ENCODE measurements at regions of chrX and their contacts with region 1.

Region 1: GRCh38 chrX:30570505-30570904 is 7.1 kb downstream of the TASL start:
- DNase-seq: no peak
- H3K4me3 ChIP-seq: no peak overlapping the region
- H3K27ac ChIP-seq: no peak overlapping the region
- H3K27me3 ChIP-seq: no peaks in the 10 kb centered on the region
- CTCF ChIP-seq: peak; percentile 43

Region 2: GRCh38 chrX:30706216-30706775 is 135.8 kb after region 1 on chrX:
- CTCF ChIA-PET with region 1: interaction called, 13 read pairs
- POLR2A ChIA-PET with region 1: no interaction called
- DNase-seq: no peak
- H3K4me3 ChIP-seq: no peak overlapping the region
- H3K27ac ChIP-seq: no peak overlapping the region
- H3K27me3 ChIP-seq: no peaks in the 10 kb centered on the region
- CTCF ChIP-seq: no peak